Activated naive CD8-positive, alpha-beta T cell treated with anti-CD3 and anti-CD28 coated beads, Interleukin-2, amount 10 ng/mL, durations not matched to agents 7 days and 5 days (primary cell): ENCODE measurements at regions of chr4 and their contacts with region 1.

Region 1: GRCh38 chr4:1289207-1290164 is at the start of gene MAEA:
- DNase-seq: peak; percentile 97
- ATAC-seq: peak; percentile 93
- H3K4me3 Mint-ChIP-seq: peak within 1 kb of the TSS; percentile 91
- H3K27ac Mint-ChIP-seq: peak within 1 kb of the TSS; percentile 85
- H3K4me1 Mint-ChIP-seq: peaks cover 26% of the 10 kb centered on the region
- H3K27me3 Mint-ChIP-seq: no peaks in the 10 kb centered on the region
- total RNA-seq, gene MAEA: 73.2 to 82.9 TPM

Region 2: GRCh38 chr4:1167247-1167949 is 122.1 kb before region 1 on chr4:
- POLR2A ChIA-PET with region 1: interaction called, 13 read pairs
- DNase-seq: peak; percentile 87
- ATAC-seq: peak; percentile 93
- H3K4me3 Mint-ChIP-seq: peak overlapping the region; percentile 84
- H3K27ac Mint-ChIP-seq: peak overlapping the region; percentile 87
- H3K4me1 Mint-ChIP-seq: peaks cover 20% of the 10 kb centered on the region
- H3K27me3 Mint-ChIP-seq: peaks cover 12% of the 10 kb centered on the region

Region 3: DNA sequence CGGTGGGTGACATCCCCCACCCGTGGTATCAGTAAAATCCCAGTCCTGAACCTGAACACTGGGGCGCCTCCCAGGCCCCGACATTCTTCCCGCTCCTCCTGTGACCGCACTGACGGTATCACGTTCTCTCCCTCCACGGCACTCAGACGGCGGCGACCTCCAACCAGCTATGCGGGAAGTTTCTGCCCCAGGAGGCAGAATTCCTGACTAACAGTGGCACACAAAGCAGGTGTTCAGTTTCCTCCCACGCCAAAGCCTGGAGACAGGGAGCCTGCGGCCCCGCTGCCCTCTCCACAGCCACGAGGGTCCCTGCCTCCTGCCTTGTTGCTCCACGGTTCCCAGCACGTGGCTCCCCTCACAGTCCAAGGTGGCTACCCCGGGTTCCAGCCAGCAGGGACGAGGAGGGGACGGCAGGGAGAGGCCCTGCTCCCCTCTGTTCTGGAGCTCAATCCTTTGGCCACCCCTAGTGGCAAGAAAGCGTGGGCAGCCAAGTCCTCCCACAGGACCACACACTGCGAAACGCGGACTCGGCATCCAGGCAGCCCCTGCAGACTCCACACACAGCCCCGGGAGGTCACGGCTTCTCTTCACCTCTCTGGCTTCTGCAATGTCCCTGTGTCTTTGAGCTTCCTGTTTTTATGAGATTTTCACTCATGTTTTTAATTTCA is 55.7 kb before region 1 on chr4:
- POLR2A ChIA-PET with region 1: no interaction called
- DNase-seq: no peak
- ATAC-seq: no peak
- H3K4me3 Mint-ChIP-seq: no peak overlapping the region
- H3K27ac Mint-ChIP-seq: peak overlapping the region; percentile 48
- H3K4me1 Mint-ChIP-seq: peaks cover 2% of the 10 kb centered on the region
- H3K27me3 Mint-ChIP-seq: no peaks in the 10 kb centered on the region

Region 4: GRCh38 chr4:1266881-1267763 is 22.4 kb before region 1 on chr4:
- POLR2A ChIA-PET with region 1: interaction called, 13 read pairs
- DNase-seq: no peak
- ATAC-seq: peak; percentile 65
- H3K4me3 Mint-ChIP-seq: peak overlapping the region; percentile 79
- H3K27ac Mint-ChIP-seq: peak overlapping the region; percentile 93
- H3K4me1 Mint-ChIP-seq: peaks cover 16% of the 10 kb centered on the region
- H3K27me3 Mint-ChIP-seq: no peaks in the 10 kb centered on the region

Region 5: DNA sequence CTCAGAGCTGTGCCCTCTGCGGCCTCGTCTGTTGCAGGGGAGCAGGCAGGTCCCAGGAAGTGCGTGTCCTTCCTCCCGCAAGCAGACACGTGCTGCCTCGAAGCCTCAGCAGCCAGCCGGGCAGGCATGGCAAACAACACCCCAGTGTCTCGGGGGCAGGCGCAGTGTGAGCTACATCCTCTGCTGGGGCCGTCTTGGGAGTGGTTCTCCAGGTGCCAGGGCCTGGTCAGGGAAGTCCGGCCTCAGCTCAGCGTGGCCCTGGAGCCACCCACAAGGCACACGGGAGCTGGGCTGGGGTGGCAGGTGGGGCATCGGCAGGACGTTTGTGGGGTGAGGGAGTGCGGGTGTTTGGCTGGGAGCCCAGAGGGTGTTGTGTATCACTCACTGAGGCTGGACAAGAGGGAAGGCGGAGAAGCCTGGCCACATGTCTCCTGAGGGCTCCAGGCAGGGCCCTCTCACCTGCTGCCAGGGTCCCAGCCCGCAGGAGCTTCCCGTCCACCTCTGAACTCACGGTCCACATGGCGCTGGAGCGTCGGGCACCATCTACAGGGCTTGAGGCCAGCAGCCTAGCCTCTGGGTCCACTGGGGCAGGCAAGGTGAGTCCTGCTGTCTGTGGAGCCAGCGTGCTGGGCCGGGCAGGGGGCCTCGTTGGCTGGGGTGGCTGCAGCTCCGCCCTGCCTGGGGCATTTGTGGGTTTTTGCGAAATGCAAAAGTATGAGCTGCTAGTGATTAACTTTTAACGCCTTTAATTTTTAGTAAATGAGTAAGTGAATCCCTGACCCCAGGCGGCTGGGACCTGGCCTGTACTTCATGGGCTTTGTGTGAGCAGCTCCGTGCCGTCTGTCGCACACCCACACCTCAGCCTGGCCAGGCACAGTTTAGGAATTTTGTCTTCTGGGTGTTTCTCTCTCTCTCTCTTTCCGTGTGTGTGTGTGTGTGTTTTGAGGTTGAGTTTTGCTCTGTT is 40.2 kb after region 1 on chr4:
- POLR2A ChIA-PET with region 1: interaction called, 14 read pairs
- DNase-seq: no peak
- ATAC-seq: peak; percentile 24
- H3K4me3 Mint-ChIP-seq: peak overlapping the region; percentile 64
- H3K27ac Mint-ChIP-seq: peak overlapping the region; percentile 28
- H3K4me1 Mint-ChIP-seq: peaks cover 24% of the 10 kb centered on the region
- H3K27me3 Mint-ChIP-seq: no peaks in the 10 kb centered on the region

Region 6: GRCh38 chr4:1492651-1493537 is 203.4 kb after region 1 on chr4:
- POLR2A ChIA-PET with region 1: no interaction called
- DNase-seq: peak; percentile 17
- ATAC-seq: no peak
- H3K4me3 Mint-ChIP-seq: no peak overlapping the region
- H3K27ac Mint-ChIP-seq: no peak overlapping the region
- H3K4me1 Mint-ChIP-seq: no peaks in the 10 kb centered on the region
- H3K27me3 Mint-ChIP-seq: no peaks in the 10 kb centered on the region